Mucosa of descending colon (tissue), 3 donors: ENCODE measurements at regions of chr11 and their contacts with region 1.

Region 1: GRCh38 chr11:34926101-34926830 is 9.8 kb downstream of the PDHX start:
- DNase-seq: peak in 1 of 3 donors; percentile 36
- ATAC-seq: peak; percentile 42
- H3K4me3 ChIP-seq: no peak overlapping the region
- H3K4me1 ChIP-seq: no peaks in the 10 kb centered on the region
- CTCF ChIP-seq: peak; percentile 25

Region 2: GRCh38 chr11:35006389-35007128 is 80.3 kb after region 1 on chr11:
- intact Hi-C with region 1: no loop called
- DNase-seq: no peak
- ATAC-seq: no peak
- H3K4me3 ChIP-seq: no peak overlapping the region
- H3K4me1 ChIP-seq: peaks cover 35% of the 10 kb centered on the region
- CTCF ChIP-seq: no peak

Region 3: GRCh38 chr11:35242412-35243242 is 316.4 kb after region 1 on chr11:
- intact Hi-C with region 1: loop called in 1 of 2 experiments (anchors 5 kb)
- DNase-seq: no peak
- ATAC-seq: peak; percentile 43
- H3K4me3 ChIP-seq: no peak overlapping the region
- H3K4me1 ChIP-seq: no peaks in the 10 kb centered on the region
- CTCF ChIP-seq: no peak

Region 4: GRCh38 chr11:35391922-35392813 is 465.9 kb after region 1 on chr11:
- intact Hi-C with region 1: loop called (anchors 5 to 10 kb)
- DNase-seq: peak; percentile 79 to 89 (median 85)
- ATAC-seq: peak; percentile 79
- H3K4me3 ChIP-seq: no peak overlapping the region
- H3K4me1 ChIP-seq: peaks cover 19% of the 10 kb centered on the region
- CTCF ChIP-seq: peak; percentile 45

Region 5: GRCh38 chr11:35485656-35486322 is 559.5 kb after region 1 on chr11:
- intact Hi-C with region 1: loop called in 1 of 2 experiments (anchors 10 kb)
- DNase-seq: peak; percentile 60 to 87 (median 77)
- ATAC-seq: peak; percentile 87
- H3K4me3 ChIP-seq: no peak overlapping the region
- H3K4me1 ChIP-seq: no peaks in the 10 kb centered on the region
- CTCF ChIP-seq: peak; percentile 84